ENCODE measurements at regions of chr9 and their contacts with region 1.

Region 1: DNA sequence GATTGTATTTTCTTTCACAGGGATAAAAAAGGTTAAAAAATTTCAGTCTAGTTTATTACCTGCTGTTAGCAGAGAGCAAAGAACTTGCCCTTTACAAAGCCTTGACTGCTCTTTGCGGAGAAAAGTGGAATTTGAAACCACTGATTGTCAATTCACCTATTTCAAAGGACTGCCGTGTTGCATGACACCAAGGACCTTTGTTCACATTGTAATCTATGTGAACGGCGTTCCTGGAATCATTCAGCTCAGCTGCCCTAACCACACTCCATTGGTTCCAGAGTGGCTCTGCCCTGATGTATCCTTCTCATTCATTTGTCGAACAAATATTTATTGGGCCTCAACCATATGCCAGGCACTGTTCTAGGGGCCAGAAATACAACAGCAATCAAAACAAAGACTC is 377.5 kb upstream of the RFX3 start:
- DNase-seq: no peak
- H3K4me3 ChIP-seq: no peak overlapping the region
- H3K27ac ChIP-seq: no peak overlapping the region
- H3K4me1 ChIP-seq: no peaks in the 10 kb centered on the region
- H3K27me3 ChIP-seq: no peaks in the 10 kb centered on the region
- CTCF ChIP-seq: no peak
- POLR2A ChIP-seq: no peak

Region 2: GRCh38 chr9:3946840-3947587 is 43.7 kb after region 1 on chr9:
- intact Hi-C with region 1: loop called (anchors 1 kb)
- DNase-seq: no peak
- H3K4me3 ChIP-seq: no peak overlapping the region
- H3K27ac ChIP-seq: no peak overlapping the region
- H3K4me1 ChIP-seq: no peaks in the 10 kb centered on the region
- H3K27me3 ChIP-seq: no peaks in the 10 kb centered on the region
- CTCF ChIP-seq: no peak
- POLR2A ChIP-seq: no peak

Measured in breast epithelium (tissue), 4 donors.